ENCODE measurements at regions of chr10 and their contacts with region 1.

Region 1: DNA sequence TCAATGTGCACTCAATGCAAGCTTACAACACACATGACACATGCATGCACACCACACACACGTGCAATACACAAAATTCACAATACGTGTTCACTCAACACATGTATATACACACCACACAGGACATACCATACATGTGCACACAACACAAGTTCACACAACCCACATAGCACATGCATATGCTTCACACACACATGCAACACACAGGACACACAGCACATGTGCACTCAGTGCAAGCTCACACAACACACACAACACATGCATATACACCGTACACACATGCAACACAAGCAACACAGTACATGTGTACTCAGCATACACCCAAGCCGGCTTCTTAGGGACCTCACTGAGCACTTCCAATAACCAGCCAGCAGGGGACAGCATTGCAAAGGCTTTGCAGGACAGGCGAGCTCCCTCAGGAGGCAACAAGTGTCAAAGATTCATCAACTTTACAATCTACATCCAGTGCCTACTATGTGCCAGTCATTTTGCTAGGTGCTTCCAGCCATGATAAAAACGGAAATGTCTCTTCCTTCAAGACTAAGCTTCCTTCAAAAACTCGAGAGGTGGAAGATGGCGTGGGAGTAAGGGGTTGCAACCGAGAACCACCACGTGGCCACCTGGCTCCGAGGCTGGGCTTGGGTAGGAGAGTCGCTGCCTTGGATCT is 61.1 kb downstream of the JCAD start:
- DNase-seq: peak; percentile 68 to 74 (median 71)
- H3K4me3 ChIP-seq: no peak overlapping the region
- H3K4me3 Mint-ChIP-seq: no peak overlapping the region
- H3K27ac ChIP-seq: no peak overlapping the region
- H3K27ac Mint-ChIP-seq: no peak overlapping the region
- H3K4me1 ChIP-seq: peaks cover 12% of the 10 kb centered on the region
- H3K4me1 Mint-ChIP-seq: peaks cover 5 to 15% (median 9%) of the 10 kb centered on the region in 4 donors
- H3K27me3 ChIP-seq: no peaks in the 10 kb centered on the region
- H3K27me3 Mint-ChIP-seq: peaks cover 42 to 44% of the 10 kb centered on the region in 2 donors

Region 2: DNA sequence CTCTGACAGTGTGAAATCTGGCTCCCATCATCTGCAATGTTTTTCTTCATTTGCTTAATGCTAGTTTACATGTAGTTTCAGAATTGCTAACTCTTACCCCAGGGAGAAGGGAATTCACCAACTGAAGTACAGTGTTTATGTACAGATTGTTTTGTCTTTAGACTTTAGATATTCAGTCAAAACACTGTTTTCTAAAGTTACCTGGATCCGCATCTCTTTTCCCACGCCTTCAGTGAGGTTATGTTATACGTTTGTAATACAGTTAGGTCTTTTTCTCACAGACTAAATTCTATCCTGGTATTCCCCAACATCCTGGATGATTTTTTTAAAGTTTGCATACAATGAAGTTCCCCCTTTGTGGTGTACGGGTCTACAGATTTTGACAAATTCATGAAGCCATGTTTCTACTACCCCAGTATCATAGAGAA is 712.6 kb before region 1 on chr10:
- CTCF ChIA-PET with region 1: no interaction called
- POLR2A ChIA-PET with region 1: no interaction called
- intact Hi-C with region 1: no loop called
- DNase-seq: no peak
- H3K4me3 ChIP-seq: no peak overlapping the region
- H3K4me3 Mint-ChIP-seq: no peak overlapping the region
- H3K27ac ChIP-seq: no peak overlapping the region
- H3K27ac Mint-ChIP-seq: no peak overlapping the region
- H3K4me1 ChIP-seq: no peaks in the 10 kb centered on the region
- H3K4me1 Mint-ChIP-seq: no peaks in the 10 kb centered on the region
- H3K27me3 ChIP-seq: no peaks in the 10 kb centered on the region
- H3K27me3 Mint-ChIP-seq: peaks cover 7 to 10% of the 10 kb centered on the region in 2 donors

Region 3: GRCh38 chr10:29627201-29628141 is 370.8 kb before region 1 on chr10:
- CTCF ChIA-PET with region 1: no interaction called
- POLR2A ChIA-PET with region 1: no interaction called
- intact Hi-C with region 1: no loop called
- DNase-seq: no peak
- H3K4me3 ChIP-seq: no peak overlapping the region
- H3K4me3 Mint-ChIP-seq: no peak overlapping the region
- H3K27ac ChIP-seq: no peak overlapping the region
- H3K27ac Mint-ChIP-seq: peak overlapping the region in 1 of 7 donors; percentile 46
- H3K4me1 ChIP-seq: no peaks in the 10 kb centered on the region
- H3K4me1 Mint-ChIP-seq: peaks cover 9 to 38% (median 14%) of the 10 kb centered on the region in 4 donors
- H3K27me3 ChIP-seq: no peaks in the 10 kb centered on the region
- H3K27me3 Mint-ChIP-seq: no peaks in the 10 kb centered on the region

Region 4: DNA sequence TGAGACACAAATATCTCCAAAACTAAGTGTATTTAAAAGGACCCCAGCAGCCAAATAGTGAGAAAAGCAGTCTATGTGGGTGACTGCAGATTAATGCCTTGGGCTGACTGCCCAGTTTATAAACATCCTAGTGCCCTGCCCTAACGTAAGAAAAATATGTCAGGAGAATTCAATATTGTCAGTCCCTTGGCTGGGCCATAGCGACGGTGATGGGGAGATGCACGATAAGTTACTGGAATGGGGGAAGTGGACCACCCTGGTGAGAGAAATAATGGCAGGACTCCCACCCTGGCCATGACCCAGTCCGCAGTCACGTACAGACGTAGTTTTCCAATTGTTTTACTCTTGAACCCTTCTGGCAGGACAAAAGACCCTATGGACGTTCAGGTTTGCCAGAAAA is 13.1 kb after region 1 on chr10:
- CTCF ChIA-PET with region 1: interaction called, 12 read pairs
- POLR2A ChIA-PET with region 1: no interaction called
- intact Hi-C with region 1: no loop called
- DNase-seq: no peak
- H3K4me3 ChIP-seq: no peak overlapping the region
- H3K4me3 Mint-ChIP-seq: no peak overlapping the region
- H3K27ac ChIP-seq: no peak overlapping the region
- H3K27ac Mint-ChIP-seq: no peak overlapping the region
- H3K4me1 ChIP-seq: no peaks in the 10 kb centered on the region
- H3K4me1 Mint-ChIP-seq: peaks cover 0 to 1% (median 0%) of the 10 kb centered on the region in 4 donors
- H3K27me3 ChIP-seq: peaks cover 5% of the 10 kb centered on the region
- H3K27me3 Mint-ChIP-seq: peaks cover 22 to 42% of the 10 kb centered on the region in 2 donors

Region 5: DNA sequence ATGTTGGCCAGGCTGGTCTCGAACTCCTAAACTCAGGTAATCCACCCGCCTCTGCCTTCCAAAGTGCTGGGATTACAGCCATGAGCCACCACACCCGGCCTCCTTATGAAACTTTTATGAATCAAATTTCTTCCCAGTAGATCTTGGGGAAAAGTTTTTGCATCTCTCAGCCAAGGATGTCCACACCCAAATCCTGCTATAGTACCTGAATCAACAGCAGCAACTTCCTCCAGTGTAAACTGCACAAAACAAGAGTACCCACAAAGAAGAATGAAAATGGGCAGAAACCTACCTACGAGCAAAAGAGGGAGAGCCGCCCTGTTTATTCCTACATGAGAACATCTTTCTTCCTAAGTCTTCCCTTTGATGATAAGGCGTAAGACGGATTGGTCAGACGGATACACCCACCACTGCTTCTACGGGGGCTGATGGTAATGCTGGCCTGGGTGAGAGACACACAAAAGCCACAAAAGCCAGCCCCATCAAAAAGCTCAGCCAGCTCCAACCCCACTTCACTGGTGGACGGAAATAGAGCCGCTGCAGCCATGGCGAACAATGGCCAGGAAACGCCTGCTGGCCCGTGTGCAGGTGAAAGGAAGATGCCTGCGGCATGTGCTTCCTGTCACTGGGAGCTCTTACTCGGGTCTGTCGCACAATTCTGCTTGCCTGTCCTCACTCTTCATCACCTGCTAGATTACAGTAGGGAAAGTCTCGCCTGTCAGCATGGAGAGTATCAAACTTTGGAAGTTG is 50.7 kb after region 1 on chr10:
- CTCF ChIA-PET with region 1: interaction called, 6 read pairs
- POLR2A ChIA-PET with region 1: no interaction called
- intact Hi-C with region 1: loop called (anchors 1 kb)
- DNase-seq: no peak
- H3K4me3 ChIP-seq: no peak overlapping the region
- H3K4me3 Mint-ChIP-seq: peak overlapping the region in 7 of 8 donors; percentile 2 to 85 (median 41)
- H3K27ac ChIP-seq: no peak overlapping the region
- H3K27ac Mint-ChIP-seq: no peak overlapping the region
- H3K4me1 ChIP-seq: peaks cover 24% of the 10 kb centered on the region
- H3K4me1 Mint-ChIP-seq: peaks cover 18 to 30% (median 23%) of the 10 kb centered on the region in 4 donors
- H3K27me3 ChIP-seq: peaks cover 8% of the 10 kb centered on the region
- H3K27me3 Mint-ChIP-seq: peaks cover 54 to 56% of the 10 kb centered on the region in 2 donors

Region 6: GRCh38 chr10:30359373-30360206 is 361.3 kb after region 1 on chr10:
- CTCF ChIA-PET with region 1: interaction called, 14 read pairs
- POLR2A ChIA-PET with region 1: no interaction called
- intact Hi-C with region 1: no loop called
- DNase-seq: peak; percentile 42 to 53 (median 47)
- H3K4me3 ChIP-seq: no peak overlapping the region
- H3K4me3 Mint-ChIP-seq: peak overlapping the region in 1 of 8 donors; percentile 9
- H3K27ac ChIP-seq: no peak overlapping the region
- H3K27ac Mint-ChIP-seq: no peak overlapping the region
- H3K4me1 ChIP-seq: peaks cover 4% of the 10 kb centered on the region
- H3K4me1 Mint-ChIP-seq: peaks cover 0 to 6% (median 0%) of the 10 kb centered on the region in 4 donors
- H3K27me3 ChIP-seq: no peaks in the 10 kb centered on the region
- H3K27me3 Mint-ChIP-seq: peaks cover 0 to 14% of the 10 kb centered on the region in 2 donors

Region 7: DNA sequence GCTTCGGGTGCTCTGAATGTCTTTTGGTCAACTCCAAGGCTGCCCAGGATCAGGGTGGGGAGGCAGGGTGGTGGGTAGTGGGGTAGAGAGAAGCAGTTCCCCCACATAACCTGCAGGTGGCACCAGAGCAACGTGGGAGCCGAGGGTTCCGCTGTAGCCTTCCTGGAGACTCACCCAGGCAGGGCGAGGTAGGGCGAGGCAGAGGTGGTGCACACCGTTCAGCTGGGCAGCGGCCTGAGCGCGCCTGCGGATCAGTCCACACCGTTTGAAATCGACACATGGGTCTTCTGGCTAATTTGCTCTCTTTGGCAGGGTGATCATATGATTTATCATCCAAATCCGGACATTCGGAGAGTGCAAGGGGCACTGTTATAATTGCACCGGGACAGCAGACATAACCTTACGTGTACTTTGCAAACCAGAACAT is 394.3 kb after region 1 on chr10:
- CTCF ChIA-PET with region 1: interaction called, 3 read pairs
- POLR2A ChIA-PET with region 1: no interaction called
- intact Hi-C with region 1: loop called (anchors 2 kb)
- DNase-seq: peak; percentile 66 to 75 (median 67)
- H3K4me3 ChIP-seq: no peak overlapping the region
- H3K4me3 Mint-ChIP-seq: peak overlapping the region in 1 of 8 donors; percentile 4
- H3K27ac ChIP-seq: no peak overlapping the region
- H3K27ac Mint-ChIP-seq: peak overlapping the region in 1 of 7 donors; percentile 62
- H3K4me1 ChIP-seq: peaks cover 6% of the 10 kb centered on the region
- H3K4me1 Mint-ChIP-seq: peaks cover 2 to 5% (median 4%) of the 10 kb centered on the region in 4 donors
- H3K27me3 ChIP-seq: no peaks in the 10 kb centered on the region
- H3K27me3 Mint-ChIP-seq: peaks cover 8 to 13% of the 10 kb centered on the region in 2 donors